Activated T-helper 2 cell treated with anti-CD3 and anti-CD28 coated beads, Interferon-gamma antibody, Interleukin-2, Interleukin-4, amounts not matched to agents 10 μg/mL and 5 μg/mL and 100 μg/mL, durations not matched to agents 14 hours and 24 hours and 36 hours (primary cell): ENCODE measurements at regions of chr18 and their contacts with region 1.

Region 1: GRCh38 chr18:35497370-35498197 is at the start of gene INO80C:
- DNase-seq: peak; percentile 90
- H3K4me3 Mint-ChIP-seq: peak within 1 kb of the TSS; percentile 96
- H3K27ac Mint-ChIP-seq: peak within 1 kb of the TSS; percentile 99
- H3K4me1 Mint-ChIP-seq: peaks cover 35% of the 10 kb centered on the region
- H3K27me3 Mint-ChIP-seq: no peaks in the 10 kb centered on the region
- total RNA-seq, gene INO80C: 34.9 and 35.9 TPM in 2 replicates

Region 2: DNA sequence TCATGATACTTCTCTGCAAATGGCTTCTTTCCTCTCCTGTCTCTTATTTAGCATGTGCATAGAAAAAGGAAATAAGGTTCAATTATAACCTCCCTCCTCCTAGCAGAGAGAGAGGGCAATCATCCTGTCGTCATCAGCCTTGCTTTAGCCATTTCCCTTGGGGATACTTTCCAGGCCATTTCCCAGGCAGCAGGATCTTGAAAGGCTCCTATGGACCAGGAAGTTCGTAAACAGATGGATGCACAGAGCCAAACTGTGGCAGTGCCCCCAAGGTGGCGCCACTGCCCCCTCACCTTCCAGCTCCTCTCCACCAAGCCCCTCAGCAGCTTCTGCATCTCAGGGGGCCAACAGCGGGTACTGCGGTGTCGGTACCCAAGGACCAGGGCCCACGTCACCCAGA is 630.1 kb before region 1 on chr18:
- intact Hi-C with region 1: loop called (anchors 10 kb)
- DNase-seq: no peak
- H3K4me3 Mint-ChIP-seq: no peak overlapping the region
- H3K27ac Mint-ChIP-seq: no peak overlapping the region
- H3K4me1 Mint-ChIP-seq: peaks cover 34% of the 10 kb centered on the region
- H3K27me3 Mint-ChIP-seq: peaks cover 12% of the 10 kb centered on the region

Region 3: DNA sequence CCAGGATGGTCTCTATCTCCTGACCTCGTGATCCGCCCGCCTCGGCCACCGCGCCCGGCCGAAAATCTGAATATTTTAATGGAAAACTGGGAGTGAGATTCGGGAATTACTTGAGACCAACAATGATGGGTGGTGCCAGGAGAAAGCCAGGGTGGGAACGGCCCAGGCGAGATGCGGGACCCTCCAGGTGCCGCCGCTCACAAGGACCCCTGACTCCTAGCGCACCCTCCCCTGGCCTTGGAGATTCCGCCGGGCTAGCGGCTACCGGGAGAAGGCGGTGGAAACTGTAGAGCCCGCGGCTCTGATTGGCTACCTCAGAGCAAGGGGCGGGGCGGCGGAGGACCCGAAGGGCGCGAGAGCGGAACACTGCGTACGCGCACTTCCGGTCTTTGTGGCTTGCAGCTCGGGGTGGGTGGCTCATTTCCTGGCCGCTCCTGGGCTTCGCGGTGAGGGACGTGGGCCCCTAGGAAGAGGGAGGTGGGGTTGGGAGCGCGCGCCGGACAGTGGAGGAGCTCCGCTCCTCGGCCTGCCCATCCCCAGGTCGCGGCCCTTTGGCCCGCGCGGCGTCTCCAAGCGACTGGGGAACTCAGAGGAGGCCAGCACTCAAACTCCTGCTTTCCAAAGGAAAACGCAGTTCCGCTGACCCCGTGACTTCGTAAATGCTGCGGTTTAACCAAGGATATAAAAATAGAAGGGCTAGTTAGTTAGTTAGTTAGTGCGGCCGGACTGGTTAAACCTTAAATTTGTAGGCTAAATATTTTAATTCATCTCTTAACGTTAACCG is 256.7 kb before region 1 on chr18 and contains the start of gene ZNF397:
- intact Hi-C with region 1: loop called (anchors 1 kb)
- DNase-seq: peak; percentile 94
- H3K4me3 Mint-ChIP-seq: peak within 1 kb of the TSS; percentile 94
- H3K27ac Mint-ChIP-seq: peak within 1 kb of the TSS; percentile 98
- H3K4me1 Mint-ChIP-seq: peaks cover 11% of the 10 kb centered on the region
- H3K27me3 Mint-ChIP-seq: no peaks in the 10 kb centered on the region
- total RNA-seq, gene ZNF397: 14.6 and 18.4 TPM in 2 replicates

Region 4: GRCh38 chr18:35415511-35416073 is 82.0 kb before region 1 on chr18:
- intact Hi-C with region 1: loop called (anchors 1 kb)
- DNase-seq: no peak
- H3K4me3 Mint-ChIP-seq: no peak overlapping the region
- H3K27ac Mint-ChIP-seq: peak overlapping the region; percentile 54
- H3K4me1 Mint-ChIP-seq: peaks cover 20% of the 10 kb centered on the region
- H3K27me3 Mint-ChIP-seq: peaks cover 17% of the 10 kb centered on the region

Region 5: GRCh38 chr18:35580701-35581539 is 83.3 kb after region 1 on chr18:
- intact Hi-C with region 1: loop called (anchors 5 kb)
- DNase-seq: peak; percentile 43
- H3K4me3 Mint-ChIP-seq: peak overlapping the region; percentile 68
- H3K27ac Mint-ChIP-seq: peak overlapping the region; percentile 51
- H3K4me1 Mint-ChIP-seq: peaks cover 27% of the 10 kb centered on the region
- H3K27me3 Mint-ChIP-seq: peaks cover 22% of the 10 kb centered on the region

Region 6: DNA sequence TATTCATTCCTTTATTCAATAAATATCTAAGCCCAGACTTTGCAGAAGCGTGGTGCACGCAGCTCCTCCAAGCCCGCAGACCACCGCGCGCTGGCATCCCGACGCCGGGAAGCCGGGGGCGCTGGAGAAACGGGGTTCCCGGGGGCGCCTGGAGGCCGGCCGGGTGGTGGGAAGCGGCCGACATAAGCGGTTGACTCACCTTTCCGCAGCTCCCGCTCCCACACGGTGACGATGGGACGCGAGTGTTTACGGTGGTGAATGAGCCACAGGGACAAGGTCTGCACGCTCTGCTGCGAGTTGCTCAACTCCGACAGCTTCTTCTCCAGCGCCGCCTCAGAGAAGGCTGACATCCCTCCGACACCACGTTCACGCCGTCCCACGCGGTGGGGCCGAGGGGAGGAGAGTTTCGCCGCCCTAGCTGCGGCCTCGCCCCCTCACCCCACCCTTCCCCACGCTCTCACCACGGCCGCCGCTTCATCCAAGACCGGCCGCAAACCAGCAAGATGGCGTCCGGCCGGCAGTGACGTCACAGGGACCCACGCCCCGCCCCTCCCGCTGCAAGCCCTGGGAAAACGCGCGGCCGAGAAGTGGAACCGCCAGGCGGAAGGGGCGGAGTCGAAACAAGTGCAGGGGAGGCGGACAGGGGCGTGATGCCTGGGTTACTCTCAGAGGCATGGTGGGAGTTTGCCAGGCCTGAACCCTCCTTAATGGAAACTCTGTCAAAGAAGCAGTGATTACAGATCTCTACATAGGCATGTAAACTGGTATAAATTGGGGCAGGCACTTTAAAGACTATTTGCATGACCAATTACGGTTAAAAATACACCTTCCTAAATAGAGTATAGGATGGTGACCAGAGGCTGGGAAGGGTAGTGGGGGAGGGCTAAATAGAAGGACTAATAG is 569.7 kb after region 1 on chr18 and contains the start of gene RPRD1A:
- intact Hi-C with region 1: loop called (anchors 2 kb)
- DNase-seq: peak; percentile 95
- H3K4me3 Mint-ChIP-seq: peak within 1 kb of the TSS; percentile 89
- H3K27ac Mint-ChIP-seq: peak within 1 kb of the TSS; percentile 92
- H3K4me1 Mint-ChIP-seq: peaks cover 22% of the 10 kb centered on the region
- H3K27me3 Mint-ChIP-seq: peaks cover 7% of the 10 kb centered on the region
- total RNA-seq, gene RPRD1A: 23.4 and 24.1 TPM in 2 replicates